CD4-positive, alpha-beta memory T cell (primary cell): ENCODE measurements at regions of chr14 and their contacts with region 1.

Region 1: DNA sequence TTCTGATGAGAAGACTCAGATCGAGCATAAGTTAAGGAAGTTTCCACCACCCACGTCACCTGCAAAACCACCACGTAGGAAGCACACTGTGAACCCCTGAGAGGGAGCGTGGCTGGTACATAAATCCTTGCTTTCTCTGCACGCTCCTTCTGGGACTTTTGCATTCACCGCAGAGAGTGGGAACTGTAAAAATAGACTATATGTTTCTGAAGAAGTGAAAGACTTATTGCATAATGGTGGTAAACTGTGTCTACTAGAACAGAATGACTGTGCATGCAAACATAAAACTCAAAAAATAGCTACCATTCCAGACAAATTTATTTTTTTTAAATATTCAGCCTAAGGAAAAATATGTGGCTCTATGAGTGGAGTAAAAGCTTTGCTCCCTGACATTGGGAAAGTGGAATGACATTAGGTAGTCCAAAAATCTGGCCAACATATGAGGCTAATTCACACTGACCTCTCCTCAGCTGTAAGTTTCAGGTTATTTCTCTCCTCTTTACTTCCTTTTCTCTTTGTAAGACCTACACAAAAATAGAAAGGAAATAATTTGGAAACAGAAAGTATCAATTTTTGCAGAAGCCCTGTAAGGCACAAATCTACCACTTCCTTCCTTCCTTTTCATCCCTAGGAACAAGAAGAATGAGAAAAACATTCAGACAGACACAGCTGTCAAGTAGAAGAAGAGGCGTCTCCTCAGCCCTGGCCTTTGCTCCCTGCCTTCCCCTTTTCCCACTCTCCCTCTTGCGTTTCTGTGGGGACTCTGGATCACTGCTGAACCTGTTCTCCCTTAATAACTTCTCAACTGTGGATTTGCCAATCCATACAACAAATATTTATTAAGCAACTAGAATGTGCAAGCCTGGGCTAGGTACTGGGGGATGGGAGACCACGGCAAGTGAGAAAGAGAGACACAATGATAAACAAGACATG is 264.3 kb upstream of the FOXN3 start:
- DNase-seq: peak in 3 of 5 donors; percentile 15 to 51 (median 16)
- H3K4me3 ChIP-seq: peak overlapping the region; percentile 24 to 35
- H3K4me3 Mint-ChIP-seq: peak overlapping the region; percentile 65 to 87 (median 76)
- H3K27ac ChIP-seq: peak overlapping the region; percentile 33
- H3K27ac Mint-ChIP-seq: peak overlapping the region; percentile 79 to 95 (median 93)
- H3K4me1 ChIP-seq: peaks cover 35% of the 10 kb centered on the region
- H3K4me1 Mint-ChIP-seq: peaks cover 26 to 49% (median 32%) of the 10 kb centered on the region in 4 donors
- H3K27me3 ChIP-seq: no peaks in the 10 kb centered on the region
- H3K27me3 Mint-ChIP-seq: no peaks in the 10 kb centered on the region

Region 2: DNA sequence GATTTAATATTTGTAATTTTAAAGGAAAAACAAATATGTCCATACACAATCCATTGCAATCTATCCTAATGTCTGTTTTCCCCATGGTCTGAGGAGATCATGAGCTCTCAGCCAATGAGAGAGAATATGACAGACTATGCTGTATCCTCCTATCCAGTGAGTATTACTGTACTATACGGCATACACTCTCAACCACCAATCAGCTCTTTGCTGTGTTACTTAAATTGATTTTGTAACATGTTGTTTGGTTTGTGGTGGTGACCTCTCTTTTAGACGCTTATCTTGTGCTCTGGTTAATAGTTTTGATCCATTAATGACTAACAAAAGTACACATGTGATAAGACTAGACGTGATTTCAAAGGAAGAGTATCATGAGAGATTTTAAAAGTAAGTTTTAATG is 32.8 kb before region 1 on chr14:
- CTCF ChIA-PET with region 1: no interaction called
- POLR2A ChIA-PET with region 1: no interaction called
- intact Hi-C with region 1: loop called (anchors 5 kb)
- DNase-seq: no peak
- H3K4me3 ChIP-seq: no peak overlapping the region
- H3K4me3 Mint-ChIP-seq: no peak overlapping the region
- H3K27ac ChIP-seq: no peak overlapping the region
- H3K27ac Mint-ChIP-seq: no peak overlapping the region
- H3K4me1 ChIP-seq: no peaks in the 10 kb centered on the region
- H3K4me1 Mint-ChIP-seq: peaks cover 4 to 10% (median 5%) of the 10 kb centered on the region in 4 donors
- H3K27me3 ChIP-seq: no peaks in the 10 kb centered on the region
- H3K27me3 Mint-ChIP-seq: no peaks in the 10 kb centered on the region